ENCODE measurements at regions of chr7 and their contacts with region 1.

Region 1: GRCh38 chr7:140673063-140673773 is 473 bp downstream of the ADCK2 start:
- DNase-seq: peak; percentile 90
- H3K4me3 Mint-ChIP-seq: peak overlapping the region; percentile 89
- H3K27ac Mint-ChIP-seq: peak overlapping the region; percentile 87
- H3K4me1 Mint-ChIP-seq: peaks cover 31% of the 10 kb centered on the region
- H3K27me3 Mint-ChIP-seq: peaks cover 4% of the 10 kb centered on the region

Region 2: GRCh38 chr7:140192620-140193019 is 480.6 kb before region 1 on chr7:
- intact Hi-C with region 1: no loop called
- DNase-seq: no peak
- H3K4me3 Mint-ChIP-seq: no peak overlapping the region
- H3K27ac Mint-ChIP-seq: no peak overlapping the region
- H3K4me1 Mint-ChIP-seq: peaks cover 16% of the 10 kb centered on the region
- H3K27me3 Mint-ChIP-seq: peaks cover 6% of the 10 kb centered on the region

Region 3: DNA sequence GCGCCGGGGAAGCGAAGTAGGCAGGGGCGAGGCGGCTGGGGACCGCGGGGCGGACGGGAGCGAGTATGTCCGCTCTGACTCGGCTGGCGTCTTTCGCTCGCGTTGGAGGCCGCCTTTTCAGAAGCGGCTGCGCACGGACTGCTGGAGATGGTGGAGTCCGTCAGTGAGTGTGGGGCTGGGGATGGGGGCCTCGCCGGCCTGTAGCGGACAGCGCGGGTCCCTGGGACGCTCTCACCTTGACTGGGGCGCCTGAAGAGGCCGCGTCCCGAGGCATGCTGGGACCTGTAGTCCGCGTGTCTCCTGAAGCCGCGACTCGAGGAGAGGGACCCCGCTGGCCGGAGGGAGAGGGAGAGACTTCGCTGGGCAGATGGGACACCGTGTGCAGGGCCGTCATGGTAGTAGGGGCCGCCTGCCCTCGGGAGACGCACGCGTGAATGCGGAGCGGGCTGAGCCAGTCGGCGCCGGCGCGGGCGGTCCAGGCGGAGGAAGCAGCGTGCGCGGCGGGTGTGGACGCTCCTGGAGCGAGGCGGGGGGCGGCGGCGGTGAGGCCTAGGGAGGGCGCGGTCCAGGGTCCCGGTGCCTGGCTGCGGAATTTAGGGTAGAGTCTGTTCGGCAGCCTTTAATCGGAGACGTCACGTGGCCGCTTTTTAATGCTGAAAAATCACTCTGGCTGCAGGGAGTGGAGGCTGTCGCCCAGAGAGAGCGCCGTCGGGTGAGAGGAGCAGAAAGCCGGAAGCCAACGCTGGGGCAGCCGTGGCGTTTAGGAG is 23.6 kb after region 1 on chr7 and contains the start of gene NDUFB2:
- intact Hi-C with region 1: loop called (anchors 1 kb)
- DNase-seq: peak; percentile 97
- H3K4me3 Mint-ChIP-seq: peak within 1 kb of the TSS; percentile 99
- H3K27ac Mint-ChIP-seq: peak within 1 kb of the TSS; percentile 99
- H3K4me1 Mint-ChIP-seq: peaks cover 27% of the 10 kb centered on the region
- H3K27me3 Mint-ChIP-seq: no peaks in the 10 kb centered on the region
- total RNA-seq, gene NDUFB2: 183 and 192 TPM in 2 replicates